Activated T-helper 1 cell treated with anti-CD3 and anti-CD28 coated beads, Interleukin-12 subunit alpha, Interleukin-12 subunit beta, Interleukin-2, Interleukin-4 antibody, amounts not matched to agents 30 ng/mL and 10 ng/mL and 1 ng/mL, durations not matched to agents 14 hours and 24 hours and 36 hours (primary cell): ENCODE measurements at regions of chr1 and their contacts with region 1.

Region 1: GRCh38 chr1:161816201-161816600 is 50.1 kb downstream of the ATF6 start:
- DNase-seq: no peak
- H3K4me3 Mint-ChIP-seq: no peak overlapping the region
- H3K27ac Mint-ChIP-seq: no peak overlapping the region
- H3K4me1 Mint-ChIP-seq: no peaks in the 10 kb centered on the region
- H3K27me3 Mint-ChIP-seq: no peaks in the 10 kb centered on the region

Region 2: DNA sequence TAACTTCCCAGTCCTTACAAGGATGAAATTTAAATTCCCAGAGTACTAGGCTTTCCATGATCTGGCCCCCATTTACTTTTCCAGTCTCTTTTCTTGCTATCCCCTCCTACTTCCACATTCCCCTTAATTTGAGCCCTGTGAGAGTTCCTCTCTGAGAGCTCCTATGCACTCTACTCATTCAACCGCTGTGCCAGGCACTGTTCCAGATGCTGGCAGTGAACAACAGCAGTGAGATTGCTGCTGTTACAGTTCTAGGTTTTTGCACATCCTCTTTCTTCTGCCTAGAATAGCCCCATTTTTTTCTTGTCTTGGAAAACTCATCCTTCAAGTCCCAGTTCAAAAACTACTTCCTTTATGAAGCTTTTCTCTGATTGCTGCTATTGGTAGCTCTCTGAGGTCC is 31.2 kb before region 1 on chr1:
- intact Hi-C with region 1: loop called (anchors 1 kb)
- DNase-seq: no peak
- H3K4me3 Mint-ChIP-seq: no peak overlapping the region
- H3K27ac Mint-ChIP-seq: no peak overlapping the region
- H3K4me1 Mint-ChIP-seq: peaks cover 4% of the 10 kb centered on the region
- H3K27me3 Mint-ChIP-seq: no peaks in the 10 kb centered on the region

Region 3: GRCh38 chr1:161843156-161843555 is 27.0 kb after region 1 on chr1:
- intact Hi-C with region 1: no loop called
- DNase-seq: no peak
- H3K4me3 Mint-ChIP-seq: no peak overlapping the region
- H3K27ac Mint-ChIP-seq: no peak overlapping the region
- H3K4me1 Mint-ChIP-seq: no peaks in the 10 kb centered on the region
- H3K27me3 Mint-ChIP-seq: no peaks in the 10 kb centered on the region